MCF 10A (cell line): ENCODE measurements at regions of chr4 and their contacts with region 1.

Region 1: DNA sequence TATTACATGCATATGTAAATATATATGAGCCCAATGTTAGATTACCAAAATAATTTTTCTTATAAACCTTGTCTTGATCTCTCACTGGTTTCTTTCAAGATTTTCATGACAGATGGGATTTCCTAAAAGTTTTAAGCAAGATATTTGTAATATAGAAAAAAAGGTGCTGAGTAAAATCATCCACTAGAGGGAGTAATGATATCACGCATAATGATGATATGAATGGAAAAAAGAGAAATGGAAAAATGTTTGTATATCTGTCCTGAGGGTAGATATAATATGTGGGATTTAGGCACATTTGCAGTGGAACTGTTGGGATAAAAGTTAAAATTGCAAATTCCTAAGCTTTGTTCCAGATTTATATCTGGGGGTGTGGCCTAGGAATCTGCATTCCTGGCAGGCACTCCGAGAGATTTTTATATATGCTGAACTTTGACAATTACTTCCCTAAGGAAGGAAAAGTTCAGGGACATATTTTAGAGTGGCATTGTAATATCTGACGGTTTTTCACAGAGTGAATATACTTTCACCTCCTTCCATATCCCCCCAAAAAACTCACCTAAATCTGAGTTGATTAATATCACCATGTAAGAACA is 60.5 kb downstream of the TMA16 start:
- DNase-seq: peak; percentile 30
- H3K4me3 Mint-ChIP-seq: no peak overlapping the region
- H3K27ac Mint-ChIP-seq: no peak overlapping the region
- H3K4me1 Mint-ChIP-seq: peaks cover 4% of the 10 kb centered on the region
- H3K27me3 Mint-ChIP-seq: no peaks in the 10 kb centered on the region
- CTCF ChIP-seq: peak; percentile 63

Region 2: DNA sequence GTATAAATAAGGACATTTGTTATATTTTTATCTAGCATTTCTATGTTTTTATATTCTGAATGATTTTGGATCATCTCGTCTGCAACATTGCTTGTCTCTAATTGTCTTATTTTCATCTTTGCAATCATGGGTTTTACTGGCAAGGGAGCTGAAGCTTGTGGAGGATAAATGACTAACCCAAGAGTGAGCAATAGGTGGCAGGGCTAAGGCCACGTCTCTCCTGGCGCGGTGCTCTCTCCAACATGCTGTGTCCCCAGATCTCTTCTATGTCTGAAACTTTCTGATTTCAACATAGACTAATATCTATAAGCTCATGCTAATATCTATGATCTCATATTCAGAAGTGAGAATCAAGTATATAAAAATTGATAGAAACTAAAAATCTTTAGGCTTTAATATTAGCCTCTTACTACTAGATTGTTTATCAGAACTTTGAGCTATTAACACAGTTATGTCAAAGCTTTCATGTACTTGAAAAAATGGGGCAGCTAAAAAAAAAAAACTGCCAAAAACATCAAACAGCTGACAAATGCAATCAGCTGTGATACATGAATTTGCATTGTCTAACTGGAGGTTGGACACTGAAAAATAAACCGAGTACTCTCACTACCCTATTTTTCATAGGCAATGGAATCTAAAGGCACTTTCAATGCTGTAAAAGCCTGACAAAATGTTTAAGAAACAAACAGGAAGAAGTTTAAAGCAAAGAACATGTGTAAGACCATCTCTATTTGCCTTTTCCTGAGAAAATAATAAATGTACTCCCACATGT is 108.7 kb after region 1 on chr4:
- CTCF ChIA-PET with region 1: interaction called, 8 read pairs
- POLR2A ChIA-PET with region 1: no interaction called
- intact Hi-C with region 1: loop called (anchors 2 kb)
- DNase-seq: no peak
- H3K4me3 Mint-ChIP-seq: no peak overlapping the region
- H3K27ac Mint-ChIP-seq: no peak overlapping the region
- H3K4me1 Mint-ChIP-seq: no peaks in the 10 kb centered on the region
- H3K27me3 Mint-ChIP-seq: no peaks in the 10 kb centered on the region
- CTCF ChIP-seq: no peak

Region 3: DNA sequence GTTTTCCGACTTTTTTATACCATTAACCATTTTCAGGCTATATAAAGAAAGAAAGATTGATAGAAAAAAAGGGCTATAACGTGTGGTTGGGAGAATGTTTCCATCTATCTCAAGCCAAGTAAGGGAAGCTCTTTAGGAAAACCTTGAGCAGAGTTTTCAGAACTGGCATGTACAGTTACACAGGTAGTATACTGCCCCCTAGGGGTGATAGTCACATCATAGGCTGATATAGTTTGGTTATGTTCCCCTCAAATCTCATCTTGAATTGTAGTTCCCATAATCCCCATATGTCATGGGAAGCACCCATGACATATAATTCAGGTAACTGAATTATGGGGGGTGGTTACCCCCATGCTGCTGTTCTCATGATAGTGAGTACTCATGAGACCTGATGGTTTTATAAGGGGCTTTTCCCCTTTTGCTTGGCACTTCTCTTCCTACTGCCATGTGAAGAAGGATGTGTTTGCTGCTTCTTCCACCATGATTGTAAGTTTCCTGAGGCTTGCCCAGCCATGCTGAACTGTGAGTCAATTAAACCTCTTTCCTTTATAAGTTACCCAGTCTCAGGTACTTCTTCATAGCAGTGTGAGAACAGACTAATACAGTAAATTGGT is 126.3 kb after region 1 on chr4:
- CTCF ChIA-PET with region 1: interaction called, 20 read pairs
- POLR2A ChIA-PET with region 1: no interaction called
- intact Hi-C with region 1: no loop called
- DNase-seq: peak; percentile 55
- H3K4me3 Mint-ChIP-seq: no peak overlapping the region
- H3K27ac Mint-ChIP-seq: no peak overlapping the region
- H3K4me1 Mint-ChIP-seq: no peaks in the 10 kb centered on the region
- H3K27me3 Mint-ChIP-seq: no peaks in the 10 kb centered on the region
- CTCF ChIP-seq: peak; percentile 57

Region 4: DNA sequence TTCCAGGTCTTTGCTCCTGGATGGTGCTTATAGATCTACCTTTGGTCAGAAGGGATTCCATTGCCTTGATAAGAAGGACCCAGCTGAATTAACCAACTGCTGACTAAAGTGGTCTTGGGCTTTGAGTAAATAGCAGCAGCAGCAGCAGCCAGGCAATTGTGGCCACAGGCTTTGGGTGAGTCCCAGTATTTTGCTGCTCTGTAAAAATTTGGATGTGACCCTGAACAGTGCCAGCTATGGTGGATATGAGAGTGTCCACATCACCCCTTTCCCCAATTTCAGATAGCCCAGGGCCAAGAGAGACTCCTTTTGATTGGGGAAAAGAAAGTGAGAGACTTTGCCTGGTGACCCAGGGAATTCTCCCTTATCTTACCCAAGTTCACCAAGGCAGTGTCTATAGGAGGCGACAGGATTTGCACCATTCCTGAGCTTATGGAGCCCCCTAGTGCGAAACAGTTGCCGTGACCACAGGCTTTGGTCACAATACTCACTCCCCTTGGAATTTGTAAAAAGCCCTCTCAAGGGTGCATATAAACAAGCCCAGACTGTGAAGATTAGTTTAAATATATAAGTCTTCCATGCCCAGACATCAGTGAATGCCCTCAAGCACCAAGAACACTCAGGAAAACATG is 457.5 kb after region 1 on chr4:
- CTCF ChIA-PET with region 1: interaction called, 48 read pairs
- POLR2A ChIA-PET with region 1: interaction called, 3 read pairs
- intact Hi-C with region 1: loop called (anchors 1 kb)
- DNase-seq: peak; percentile 66
- H3K4me3 Mint-ChIP-seq: no peak overlapping the region
- H3K27ac Mint-ChIP-seq: no peak overlapping the region
- H3K4me1 Mint-ChIP-seq: no peaks in the 10 kb centered on the region
- H3K27me3 Mint-ChIP-seq: no peaks in the 10 kb centered on the region
- CTCF ChIP-seq: peak; percentile 55

Region 5: DNA sequence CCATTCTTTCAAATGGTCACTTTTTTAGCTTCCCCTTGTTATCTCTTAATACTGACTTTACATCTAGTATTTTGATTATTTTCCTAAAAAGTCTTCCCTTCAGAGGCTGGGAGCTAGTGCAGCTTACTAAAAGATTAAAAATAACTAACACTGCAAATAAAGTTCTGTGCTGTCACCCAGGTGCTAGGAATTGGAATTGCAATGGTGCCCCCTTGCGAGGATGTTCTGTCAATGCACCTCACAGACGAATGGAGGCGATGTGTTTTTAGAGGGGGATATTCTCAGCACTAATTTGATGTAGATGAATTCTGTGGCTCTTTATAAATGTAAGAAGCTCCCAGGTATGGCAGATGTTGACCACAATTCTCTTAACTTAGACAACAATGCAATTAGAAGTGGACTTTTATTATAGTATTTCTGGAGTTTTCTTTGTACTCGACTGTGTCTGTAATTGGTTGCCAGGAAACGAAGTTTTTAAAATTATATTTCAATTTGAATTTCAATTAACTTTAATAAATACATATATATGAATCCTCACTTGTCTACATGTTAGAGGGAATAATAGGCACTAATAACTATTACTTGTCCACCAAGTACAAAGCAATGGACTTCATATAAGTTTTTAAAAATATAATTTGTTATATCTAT is 1177.0 kb after region 1 on chr4:
- CTCF ChIA-PET with region 1: interaction called, 65 read pairs
- POLR2A ChIA-PET with region 1: no interaction called
- intact Hi-C with region 1: loop called (anchors 1 kb)
- DNase-seq: peak; percentile 71
- H3K4me3 Mint-ChIP-seq: no peak overlapping the region
- H3K27ac Mint-ChIP-seq: no peak overlapping the region
- H3K4me1 Mint-ChIP-seq: no peaks in the 10 kb centered on the region
- H3K27me3 Mint-ChIP-seq: no peaks in the 10 kb centered on the region
- CTCF ChIP-seq: peak; percentile 88